CD4-positive, alpha-beta memory T cell (primary cell): ENCODE measurements at regions of chr7 and their contacts with region 1.

Region 1: GRCh38 chr7:51162724-51163329 is 153.8 kb downstream of the COBL start:
- DNase-seq: peak; percentile 36 to 55 (median 52)
- H3K4me3 ChIP-seq: no peak overlapping the region
- H3K4me3 Mint-ChIP-seq: peak overlapping the region in 1 of 8 donors; percentile 2
- H3K27ac ChIP-seq: no peak overlapping the region
- H3K27ac Mint-ChIP-seq: peak overlapping the region in 1 of 7 donors; percentile 11
- H3K4me1 ChIP-seq: peaks cover 6% of the 10 kb centered on the region
- H3K4me1 Mint-ChIP-seq: peaks cover 0 to 8% (median 1%) of the 10 kb centered on the region in 4 donors
- H3K27me3 ChIP-seq: no peaks in the 10 kb centered on the region
- H3K27me3 Mint-ChIP-seq: peaks cover 14 to 19% of the 10 kb centered on the region in 2 donors

Region 2: DNA sequence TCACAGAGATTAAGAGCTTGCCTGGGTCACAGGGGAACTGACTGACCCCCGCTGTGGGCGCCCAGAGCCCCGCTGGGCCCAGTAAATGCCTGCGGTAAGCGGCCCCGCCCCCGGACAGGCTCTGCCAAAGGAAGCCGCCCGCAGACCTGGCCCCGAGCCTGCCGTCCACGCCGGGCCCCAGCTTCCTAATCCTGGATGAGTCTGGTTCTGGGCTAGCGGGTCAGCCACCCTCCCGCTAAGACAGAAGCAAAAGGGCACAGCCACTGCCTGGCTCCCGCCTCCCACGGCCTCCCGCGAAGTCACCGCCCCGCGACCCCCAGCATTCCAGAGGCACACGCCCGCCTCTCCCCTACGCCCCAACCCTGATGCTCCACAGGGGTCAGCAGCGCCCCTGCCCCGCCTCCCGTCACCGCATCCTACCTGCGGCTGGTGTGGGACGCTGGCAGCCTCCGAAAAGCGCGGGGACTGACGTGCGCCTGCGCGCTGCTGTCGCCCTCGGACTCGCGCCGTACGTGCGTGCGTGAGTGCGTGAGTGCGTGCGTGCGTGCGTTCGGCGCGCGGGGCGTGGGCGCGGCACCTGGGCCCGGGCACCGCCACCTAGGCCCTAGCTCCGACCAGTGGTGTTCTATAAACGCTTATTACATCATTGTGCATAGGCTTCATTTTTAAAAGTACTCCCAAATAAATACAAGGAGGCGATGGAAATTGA is 712.8 kb before region 1 on chr7 and contains the start of gene FIGNL1:
- CTCF ChIA-PET with region 1: interaction called, 3 read pairs
- POLR2A ChIA-PET with region 1: no interaction called
- intact Hi-C with region 1: loop called (anchors 5 kb)
- DNase-seq: peak; percentile 77 to 85 (median 83)
- H3K4me3 ChIP-seq: peak within 1 kb of the TSS; percentile 66 to 73
- H3K4me3 Mint-ChIP-seq: peak within 1 kb of the TSS; percentile 87 to 97 (median 92)
- H3K27ac ChIP-seq: peak within 1 kb of the TSS; percentile 79
- H3K27ac Mint-ChIP-seq: peak within 1 kb of the TSS; percentile 17 to 99 (median 96)
- H3K4me1 ChIP-seq: peaks cover 20% of the 10 kb centered on the region
- H3K4me1 Mint-ChIP-seq: peaks cover 17 to 28% (median 19%) of the 10 kb centered on the region in 4 donors
- H3K27me3 ChIP-seq: no peaks in the 10 kb centered on the region
- H3K27me3 Mint-ChIP-seq: no peaks in the 10 kb centered on the region
- total RNA-seq, gene FIGNL1: 16.2 to 17.1 TPM

Region 3: DNA sequence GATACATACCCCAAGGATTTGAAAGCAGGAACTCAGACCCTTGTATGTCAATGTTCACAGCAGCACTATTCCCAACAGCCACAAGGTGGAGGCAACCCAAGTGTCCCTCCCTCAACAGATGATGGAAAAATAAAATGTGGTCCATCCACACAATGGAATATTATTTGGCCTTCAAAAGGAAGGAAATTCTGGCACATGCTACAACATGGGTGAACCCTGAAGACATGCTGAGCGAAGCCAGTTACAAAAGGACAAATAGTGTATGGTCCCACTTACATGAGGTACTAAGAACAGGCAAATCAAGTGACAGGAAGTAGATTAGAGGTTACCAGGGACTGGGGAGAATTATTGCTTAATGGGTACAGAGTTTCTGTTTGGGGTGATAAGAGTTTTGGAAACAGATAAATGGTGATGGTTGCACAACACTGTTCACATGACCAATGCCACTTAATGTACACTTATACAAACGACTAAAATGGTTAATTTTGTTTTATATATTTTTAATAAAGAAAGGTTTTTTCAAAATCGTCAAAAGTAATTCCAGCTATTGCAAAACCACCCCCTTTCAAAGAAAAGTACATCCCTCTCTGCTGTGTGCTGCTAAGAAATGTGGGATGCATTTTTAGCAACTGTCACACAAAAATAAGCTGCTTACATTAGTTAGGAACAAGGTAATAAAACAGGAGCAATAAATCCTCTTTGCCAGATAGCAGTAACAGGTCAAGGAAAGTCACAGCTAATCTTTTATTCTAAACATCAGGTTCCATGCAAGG is 465.8 kb before region 1 on chr7:
- CTCF ChIA-PET with region 1: interaction called, 26 read pairs
- POLR2A ChIA-PET with region 1: no interaction called
- intact Hi-C with region 1: loop called (anchors 2 kb)
- DNase-seq: peak in 4 of 5 donors; percentile 15 to 24 (median 20)
- H3K4me3 ChIP-seq: no peak overlapping the region
- H3K4me3 Mint-ChIP-seq: no peak overlapping the region
- H3K27ac ChIP-seq: no peak overlapping the region
- H3K27ac Mint-ChIP-seq: peak overlapping the region in 1 of 7 donors; percentile 14
- H3K4me1 ChIP-seq: no peaks in the 10 kb centered on the region
- H3K4me1 Mint-ChIP-seq: peaks cover 3 to 4% (median 4%) of the 10 kb centered on the region in 4 donors
- H3K27me3 ChIP-seq: no peaks in the 10 kb centered on the region
- H3K27me3 Mint-ChIP-seq: peaks cover 0 to 2% of the 10 kb centered on the region in 2 donors

Region 4: GRCh38 chr7:51141451-51142003 is 21.3 kb before region 1 on chr7:
- CTCF ChIA-PET with region 1: interaction called, 63 read pairs
- POLR2A ChIA-PET with region 1: no interaction called
- intact Hi-C with region 1: no loop called
- DNase-seq: peak in 1 of 5 donors; percentile 36
- H3K4me3 ChIP-seq: no peak overlapping the region
- H3K4me3 Mint-ChIP-seq: no peak overlapping the region
- H3K27ac ChIP-seq: no peak overlapping the region
- H3K27ac Mint-ChIP-seq: peak overlapping the region in 1 of 7 donors; percentile 46
- H3K4me1 ChIP-seq: peaks cover 6% of the 10 kb centered on the region
- H3K4me1 Mint-ChIP-seq: peaks cover 6 to 15% (median 11%) of the 10 kb centered on the region in 4 donors
- H3K27me3 ChIP-seq: no peaks in the 10 kb centered on the region
- H3K27me3 Mint-ChIP-seq: peaks cover 2 to 5% of the 10 kb centered on the region in 2 donors

Region 5: DNA sequence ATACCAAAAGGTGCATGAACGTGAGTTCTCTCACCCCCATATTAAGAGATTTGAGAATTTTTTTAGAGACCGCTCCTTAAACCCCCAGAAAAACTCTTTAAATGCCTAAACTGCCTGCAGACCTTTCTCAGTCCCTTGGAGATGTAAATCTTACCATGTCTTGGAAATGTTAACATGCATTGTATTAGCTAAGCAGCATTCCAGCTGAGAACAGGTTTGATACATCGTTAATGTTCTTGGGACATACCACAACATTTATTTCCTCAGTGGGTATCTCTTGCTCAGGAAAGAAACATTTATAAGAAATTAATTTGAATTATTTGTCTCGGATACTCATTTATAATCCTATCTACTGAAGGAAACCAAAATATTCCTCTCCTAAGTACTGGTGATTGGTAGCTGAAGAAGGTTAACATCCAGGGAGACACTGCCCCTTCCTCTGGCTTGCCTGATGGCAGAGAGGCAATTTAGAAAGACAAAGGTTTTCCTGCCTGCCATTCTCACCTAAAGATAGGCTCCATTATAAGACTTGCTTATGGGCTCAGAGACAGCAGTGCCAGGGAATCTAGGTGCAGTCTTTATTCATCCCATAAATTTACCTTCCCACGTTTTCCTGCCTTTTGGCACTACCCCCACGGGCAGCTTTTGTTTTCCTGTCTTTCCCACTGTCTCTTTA is 12.6 kb after region 1 on chr7:
- CTCF ChIA-PET with region 1: interaction called, 24 read pairs
- POLR2A ChIA-PET with region 1: no interaction called
- intact Hi-C with region 1: no loop called
- DNase-seq: no peak
- H3K4me3 ChIP-seq: no peak overlapping the region
- H3K4me3 Mint-ChIP-seq: no peak overlapping the region
- H3K27ac ChIP-seq: no peak overlapping the region
- H3K27ac Mint-ChIP-seq: no peak overlapping the region
- H3K4me1 ChIP-seq: no peaks in the 10 kb centered on the region
- H3K4me1 Mint-ChIP-seq: no peaks in the 10 kb centered on the region
- H3K27me3 ChIP-seq: no peaks in the 10 kb centered on the region
- H3K27me3 Mint-ChIP-seq: peaks cover 15% of the 10 kb centered on the region in 2 donors

Region 6: DNA sequence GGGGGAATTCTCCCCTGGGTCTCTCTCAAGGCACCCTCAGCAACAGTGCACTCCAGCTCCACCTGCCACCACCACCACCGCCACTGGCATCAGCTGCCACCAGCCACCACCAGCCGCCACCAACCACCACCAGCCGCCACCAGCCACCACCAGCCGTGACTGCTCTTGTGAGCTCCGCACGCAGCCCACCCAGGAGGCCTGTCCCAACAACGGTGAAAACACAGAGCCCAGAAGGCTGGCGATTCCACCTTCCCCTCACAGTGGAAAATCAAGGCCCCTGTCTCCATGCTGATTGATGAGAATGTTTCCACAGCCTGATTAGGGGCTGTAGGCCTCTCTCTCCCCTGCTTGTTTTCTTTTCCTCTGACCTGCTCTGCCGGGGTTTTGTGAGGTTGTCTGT is 112.7 kb after region 1 on chr7:
- CTCF ChIA-PET with region 1: no interaction called
- POLR2A ChIA-PET with region 1: no interaction called
- intact Hi-C with region 1: no loop called
- DNase-seq: no peak
- H3K4me3 ChIP-seq: no peak overlapping the region
- H3K4me3 Mint-ChIP-seq: no peak overlapping the region
- H3K27ac ChIP-seq: no peak overlapping the region
- H3K27ac Mint-ChIP-seq: no peak overlapping the region
- H3K4me1 ChIP-seq: no peaks in the 10 kb centered on the region
- H3K4me1 Mint-ChIP-seq: no peaks in the 10 kb centered on the region
- H3K27me3 ChIP-seq: no peaks in the 10 kb centered on the region
- H3K27me3 Mint-ChIP-seq: peaks cover 4 to 17% of the 10 kb centered on the region in 2 donors